PC-9 (cell line): ENCODE measurements at regions of chr2 and their contacts with region 1.

Region 1: DNA sequence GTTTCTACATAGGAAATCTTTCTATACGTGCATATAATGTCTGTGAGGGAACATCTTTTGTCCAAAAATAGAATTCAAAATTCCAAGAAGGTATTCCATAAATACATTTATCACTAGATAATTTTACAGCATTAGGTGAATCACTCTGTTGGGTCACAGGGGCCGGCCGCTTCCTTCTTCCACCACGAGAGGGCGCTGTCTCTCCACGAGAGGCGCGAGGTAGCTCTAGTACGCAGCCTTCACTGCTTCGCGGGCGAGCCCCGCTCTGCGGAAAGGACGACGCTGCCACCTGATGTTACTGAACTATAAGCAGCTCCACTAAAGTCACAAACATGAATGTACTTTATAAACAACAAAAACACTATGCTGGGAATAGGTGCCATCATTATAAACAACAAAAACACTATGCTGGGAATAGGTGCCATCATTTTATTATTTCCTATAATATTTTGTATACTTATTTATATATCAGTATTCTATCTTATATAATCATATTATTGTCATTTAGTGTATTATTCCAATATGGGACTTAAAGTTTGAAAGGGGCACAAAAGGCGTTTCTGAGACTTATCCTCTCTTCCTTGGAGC is 69.4 kb upstream of the REV1 start:
- DNase-seq: peak; percentile 51 to 76
- H3K4me3 ChIP-seq: no peak overlapping the region
- H3K27ac ChIP-seq: no peak overlapping the region
- H3K4me1 ChIP-seq: no peaks in the 10 kb centered on the region
- H3K27me3 ChIP-seq: peaks cover 94% of the 10 kb centered on the region
- CTCF ChIP-seq: peak; percentile 99

Region 2: GRCh38 chr2:99085421-99085820 is 473.7 kb before region 1 on chr2:
- CTCF ChIA-PET with region 1: interaction called, 11 read pairs
- POLR2A ChIA-PET with region 1: no interaction called
- intact Hi-C with region 1: no loop called
- DNase-seq: no peak
- H3K4me3 ChIP-seq: no peak overlapping the region
- H3K27ac ChIP-seq: no peak overlapping the region
- H3K4me1 ChIP-seq: no peaks in the 10 kb centered on the region
- H3K27me3 ChIP-seq: no peaks in the 10 kb centered on the region
- CTCF ChIP-seq: peak; percentile 72

Region 3: DNA sequence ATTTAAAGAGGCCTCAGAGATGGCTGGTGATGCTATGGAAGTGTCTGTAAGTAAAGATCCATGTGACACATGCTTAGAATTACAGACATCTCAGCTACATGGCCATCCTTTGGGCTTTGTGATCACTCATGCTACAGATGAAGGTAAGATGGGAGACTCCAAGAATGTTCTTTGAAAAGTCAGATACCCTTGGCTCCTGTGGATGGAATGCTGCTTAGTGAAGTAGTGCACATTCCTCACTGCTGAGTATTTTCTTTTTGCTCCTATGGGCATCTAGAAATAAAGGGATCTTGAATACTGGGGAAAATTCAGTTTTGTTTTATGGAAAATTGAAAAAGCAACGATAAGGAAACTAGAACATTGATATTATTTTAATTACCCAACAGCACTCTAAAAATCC is 14.1 kb before region 1 on chr2:
- CTCF ChIA-PET with region 1: no interaction called
- POLR2A ChIA-PET with region 1: no interaction called
- intact Hi-C with region 1: no loop called
- DNase-seq: no peak
- H3K4me3 ChIP-seq: no peak overlapping the region
- H3K27ac ChIP-seq: no peak overlapping the region
- H3K4me1 ChIP-seq: no peaks in the 10 kb centered on the region
- H3K27me3 ChIP-seq: peaks cover 100% of the 10 kb centered on the region
- CTCF ChIP-seq: no peak

Region 4: GRCh38 chr2:99819766-99820165 is 260.6 kb after region 1 on chr2:
- CTCF ChIA-PET with region 1: no interaction called
- POLR2A ChIA-PET with region 1: no interaction called
- intact Hi-C with region 1: loop called (anchors 10 kb)
- DNase-seq: no peak
- H3K4me3 ChIP-seq: no peak overlapping the region
- H3K27ac ChIP-seq: no peak overlapping the region
- H3K4me1 ChIP-seq: no peaks in the 10 kb centered on the region
- H3K27me3 ChIP-seq: peaks cover 68% of the 10 kb centered on the region
- CTCF ChIP-seq: no peak

Region 5: GRCh38 chr2:100008956-100009355 is 449.8 kb after region 1 on chr2:
- CTCF ChIA-PET with region 1: interaction called, 11 read pairs
- POLR2A ChIA-PET with region 1: no interaction called
- intact Hi-C with region 1: no loop called
- DNase-seq: no peak
- H3K4me3 ChIP-seq: no peak overlapping the region
- H3K27ac ChIP-seq: no peak overlapping the region
- H3K4me1 ChIP-seq: no peaks in the 10 kb centered on the region
- H3K27me3 ChIP-seq: peaks cover 83% of the 10 kb centered on the region
- CTCF ChIP-seq: no peak

Region 6: GRCh38 chr2:100242891-100243619 is 683.9 kb after region 1 on chr2:
- CTCF ChIA-PET with region 1: no interaction called
- POLR2A ChIA-PET with region 1: no interaction called
- intact Hi-C with region 1: loop called (anchors 1 kb)
- DNase-seq: peak in 1 of 2 experiments; percentile 39
- H3K4me3 ChIP-seq: no peak overlapping the region
- H3K27ac ChIP-seq: no peak overlapping the region
- H3K4me1 ChIP-seq: no peaks in the 10 kb centered on the region
- H3K27me3 ChIP-seq: peaks cover 95% of the 10 kb centered on the region
- CTCF ChIP-seq: peak; percentile 80

Region 7: DNA sequence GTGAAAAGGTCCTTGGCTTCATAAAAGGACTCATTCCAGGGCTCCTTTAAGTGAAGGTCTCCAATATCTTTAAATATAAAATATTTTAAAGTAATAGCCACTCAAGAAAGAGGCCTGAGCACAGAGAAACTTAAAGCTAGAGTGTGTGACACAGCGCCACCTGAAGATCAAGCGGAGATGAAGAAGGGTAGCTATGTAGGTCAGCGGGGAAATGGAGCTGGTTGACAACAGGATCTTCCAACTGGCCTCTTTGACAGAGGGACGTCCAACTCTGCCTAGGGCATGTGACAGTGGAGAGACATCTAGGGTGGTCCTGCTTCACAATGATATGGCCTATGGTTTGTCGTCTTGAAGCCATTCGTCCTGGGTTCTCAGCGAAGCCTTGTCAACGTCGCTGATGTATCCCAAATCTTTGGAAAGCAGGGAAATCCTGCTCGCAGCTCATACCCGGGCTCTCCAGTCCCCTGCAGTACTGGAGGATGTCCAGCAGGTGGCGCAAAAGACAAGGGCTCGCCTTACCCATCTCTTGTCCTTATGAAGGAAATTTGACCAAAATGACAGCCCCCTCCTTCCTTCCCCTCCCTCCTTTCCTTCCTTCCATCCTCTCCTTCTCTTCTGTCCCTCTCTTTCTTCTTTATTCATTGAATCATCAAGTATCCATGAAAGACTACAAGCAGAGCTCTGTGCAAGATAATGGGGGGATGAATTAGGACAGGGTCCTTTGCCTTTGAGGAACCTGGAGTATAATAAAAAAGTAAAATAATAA is 703.6 kb after region 1 on chr2:
- CTCF ChIA-PET with region 1: interaction called, 4 read pairs
- POLR2A ChIA-PET with region 1: no interaction called
- intact Hi-C with region 1: loop called (anchors 1 kb)
- DNase-seq: peak in 1 of 2 experiments; percentile 56
- H3K4me3 ChIP-seq: no peak overlapping the region
- H3K27ac ChIP-seq: no peak overlapping the region
- H3K4me1 ChIP-seq: no peaks in the 10 kb centered on the region
- H3K27me3 ChIP-seq: peaks cover 90% of the 10 kb centered on the region
- CTCF ChIP-seq: peak; percentile 99